Adrenal gland (tissue), 19 donors: ENCODE measurements at regions of chr12 and their contacts with region 1.

Region 1: GRCh38 chr12:53500776-53501614 is at the start of gene TARBP2:
- DNase-seq: peak; percentile 96 to 100 (median 99)
- H3K4me3 ChIP-seq: peak within 1 kb of the TSS in 3 of 4 donors; percentile 53 to 74 (median 57)
- H3K27ac ChIP-seq: peak within 1 kb of the TSS; percentile 92 to 100 (median 99)
- H3K4me1 ChIP-seq: peaks cover 29 to 48% of the 10 kb centered on the region in 2 donors
- H3K27me3 ChIP-seq: no peaks in the 10 kb centered on the region
- CTCF ChIP-seq: peak in 2 of 6 experiments; percentile 3 to 8
- POLR2A ChIP-seq: peak; percentile 48 to 71
- total RNA-seq, gene TARBP2: 22.6 to 55.2 (median 31.4) TPM

Region 2: DNA sequence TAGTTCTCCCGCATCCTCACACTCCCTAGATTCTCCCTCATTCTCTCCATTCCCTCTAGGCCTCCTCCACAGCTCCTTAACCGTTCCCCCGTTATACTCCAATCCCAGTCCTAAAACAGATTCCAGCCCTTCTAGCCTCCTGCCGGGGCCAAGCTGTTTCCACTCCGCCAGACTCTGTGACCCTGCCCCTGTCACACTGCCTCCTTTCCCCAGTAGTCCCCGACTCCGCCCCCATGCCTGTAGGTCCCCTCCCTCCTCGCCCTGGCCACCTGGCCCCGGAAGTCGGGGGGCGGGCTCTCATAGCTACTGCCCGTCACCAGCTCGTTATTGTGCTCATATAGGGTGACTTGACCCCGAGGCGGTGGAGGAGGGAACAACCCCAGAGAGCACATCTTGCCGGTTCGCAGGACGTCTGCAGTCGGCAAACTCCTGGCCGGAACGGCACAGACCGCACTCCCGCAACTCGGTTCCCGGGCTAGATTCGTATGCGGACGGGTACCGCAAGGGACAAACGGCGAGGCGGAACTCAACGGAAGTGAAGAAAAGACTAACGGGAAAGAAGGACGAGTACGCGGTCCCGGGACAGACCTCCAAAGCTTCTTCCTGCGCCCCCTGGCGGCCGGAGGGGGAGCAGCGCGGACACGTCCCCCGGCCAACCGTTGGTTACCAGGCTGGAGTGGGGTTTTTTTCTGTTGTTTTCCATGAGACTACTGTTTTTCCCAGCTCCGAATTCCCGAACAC is 179.8 kb before region 1 on chr12 and contains the start of gene AAAS:
- intact Hi-C with region 1: loop called in 1 of 2 experiments (anchors 10 kb)
- DNase-seq: peak; percentile 96 to 99 (median 97)
- H3K4me3 ChIP-seq: peak within 1 kb of the TSS; percentile 11 to 88 (median 78)
- H3K27ac ChIP-seq: peak within 1 kb of the TSS; percentile 50 to 98 (median 88)
- H3K4me1 ChIP-seq: peaks cover 23 to 37% of the 10 kb centered on the region in 2 donors
- H3K27me3 ChIP-seq: no peaks in the 10 kb centered on the region
- CTCF ChIP-seq: peak; percentile 97 to 100 (median 98)
- POLR2A ChIP-seq: peak; percentile 66 to 89
- total RNA-seq, gene AAAS: 50.1 to 108 (median 74.1) TPM

Region 3: GRCh38 chr12:53451661-53452158 is 49.3 kb before region 1 on chr12 and contains the start of gene PCBP2:
- intact Hi-C with region 1: loop called in 1 of 2 experiments (anchors 5 kb)
- DNase-seq: peak; percentile 97 to 99 (median 99)
- H3K4me3 ChIP-seq: peak within 1 kb of the TSS; percentile 13 to 92 (median 63)
- H3K27ac ChIP-seq: peak within 1 kb of the TSS; percentile 85 to 99 (median 95)
- H3K4me1 ChIP-seq: peaks cover 11 to 28% of the 10 kb centered on the region in 2 donors
- H3K27me3 ChIP-seq: no peaks in the 10 kb centered on the region
- CTCF ChIP-seq: peak; percentile 66 to 99 (median 96)
- POLR2A ChIP-seq: peak; percentile 45 to 88
- total RNA-seq, gene PCBP2: 255 to 1,158 (median 547) TPM